Common myeloid progenitor, CD34-positive (primary cell): ENCODE measurements at regions of chr20 and their contacts with region 1.

Region 1: GRCh38 chr20:20237093-20237959 is 130.6 kb upstream of the INSM1 start:
- DNase-seq: peak; percentile 27 to 59 (median 51)
- H3K4me3 ChIP-seq: no peak overlapping the region
- H3K27ac ChIP-seq: no peak overlapping the region
- H3K4me1 ChIP-seq: peaks cover 0 to 3% (median under 1%) of the 10 kb centered on the region in 4 experiments
- H3K27me3 ChIP-seq: peaks cover 0 to 2% (median 0%) of the 10 kb centered on the region in 5 experiments

Region 2: GRCh38 chr20:19890445-19891051 is 346.8 kb before region 1 on chr20:
- CTCF ChIA-PET with region 1: no interaction called
- POLR2A ChIA-PET with region 1: no interaction called
- DNase-seq: no peak
- H3K4me3 ChIP-seq: no peak overlapping the region
- H3K27ac ChIP-seq: no peak overlapping the region
- H3K4me1 ChIP-seq: peaks cover 0 to 11% (median 4%) of the 10 kb centered on the region in 4 experiments
- H3K27me3 ChIP-seq: no peaks in the 10 kb centered on the region

Region 3: GRCh38 chr20:20083807-20084206 is 153.5 kb before region 1 on chr20:
- CTCF ChIA-PET with region 1: interaction called, 24 read pairs
- POLR2A ChIA-PET with region 1: no interaction called
- DNase-seq: peak; percentile 29 to 69 (median 68)
- H3K4me3 ChIP-seq: peak overlapping the region in 1 of 7 experiments; percentile 57
- H3K27ac ChIP-seq: no peak overlapping the region
- H3K4me1 ChIP-seq: peaks cover 0 to 4% (median 0%) of the 10 kb centered on the region in 4 experiments
- H3K27me3 ChIP-seq: peaks cover 0 to 3% (median 0%) of the 10 kb centered on the region in 5 experiments

Region 4: GRCh38 chr20:20255099-20255498 is 17.8 kb after region 1 on chr20:
- CTCF ChIA-PET with region 1: interaction called, 13 read pairs
- POLR2A ChIA-PET with region 1: no interaction called
- DNase-seq: peak; percentile 20 to 81 (median 75)
- H3K4me3 ChIP-seq: no peak overlapping the region
- H3K27ac ChIP-seq: no peak overlapping the region
- H3K4me1 ChIP-seq: peaks cover 0 to 2% (median 0%) of the 10 kb centered on the region in 4 experiments
- H3K27me3 ChIP-seq: peaks cover 0 to 18% (median 4%) of the 10 kb centered on the region in 5 experiments